Heart right ventricle (tissue), 16 donors: ENCODE measurements at regions of chr5 and their contacts with region 1.

Region 1: DNA sequence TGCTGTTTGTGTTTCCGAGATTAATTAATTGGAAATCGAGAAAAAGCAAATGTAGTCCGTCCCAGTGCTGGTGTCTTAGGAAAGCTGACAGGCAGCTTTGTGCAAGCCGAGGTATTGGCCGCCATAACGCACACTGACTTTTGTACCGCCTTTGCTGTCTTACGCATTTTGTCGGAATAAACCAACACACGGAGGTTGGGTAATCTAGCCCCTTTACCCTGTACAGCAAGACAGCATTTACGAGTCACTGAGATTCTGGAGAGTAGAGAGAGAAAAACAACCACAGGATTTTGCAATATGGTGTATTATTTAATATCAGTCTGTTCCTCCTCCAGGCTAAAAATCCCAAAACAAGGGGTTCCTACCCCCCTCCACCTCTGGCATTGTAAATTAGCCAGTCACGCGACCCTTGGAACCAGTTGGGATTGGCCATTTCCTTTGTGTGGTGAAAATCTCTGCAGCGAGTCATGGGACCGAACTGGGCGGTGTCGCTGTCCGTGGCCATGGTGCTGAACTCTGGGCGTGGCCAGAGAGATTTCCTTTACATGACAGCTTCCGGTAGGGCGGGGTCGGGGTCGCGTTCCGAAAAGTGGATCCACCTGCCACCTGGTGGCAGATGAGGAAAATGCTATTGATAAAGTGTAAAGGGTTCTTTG is 10.3 kb upstream of the PCDHB1 start:
- DNase-seq: peak; percentile 85 to 92
- ATAC-seq: peak; percentile 95 to 98 (median 97)
- H3K4me3 ChIP-seq: peak overlapping the region in 9 of 10 donors; percentile 23 to 56 (median 36)
- H3K27ac ChIP-seq: peak overlapping the region in 2 of 10 donors; percentile 30 to 40
- H3K4me1 ChIP-seq: peaks cover 0 to 13% (median 8%) of the 10 kb centered on the region in 9 donors
- H3K27me3 ChIP-seq: peaks cover 0 to 34% (median 12%) of the 10 kb centered on the region in 7 donors
- CTCF ChIP-seq: peak; percentile 37 to 82 (median 69)

Region 2: GRCh38 chr5:140833997-140834723 is 206.7 kb before region 1 on chr5 and contains the start of gene PCDHA7:
- intact Hi-C with region 1: loop called in 2 of 10 experiments (anchors 5 to 10 kb)
- DNase-seq: no peak
- ATAC-seq: no peak
- H3K4me3 ChIP-seq: peak within 1 kb of the TSS in 2 of 10 donors; percentile 32 to 38
- H3K27ac ChIP-seq: no peak within 1 kb of the TSS
- H3K4me1 ChIP-seq: no peaks in the 10 kb centered on the region
- H3K27me3 ChIP-seq: peaks cover 0 to 93% (median 55%) of the 10 kb centered on the region in 7 donors
- CTCF ChIP-seq: peak in 3 of 9 donors; percentile 18 to 37 (median 24)
- total RNA-seq, gene PCDHA7: 0.07 to 0.15 (median 0.11) TPM in 3 of 10 donors, not detected in the others

Region 3: GRCh38 chr5:140868721-140869554 is 172.0 kb before region 1 on chr5 and contains the start of gene PCDHA11:
- intact Hi-C with region 1: loop called in 2 of 10 experiments (anchors 5 to 10 kb)
- DNase-seq: no peak
- ATAC-seq: no peak
- H3K4me3 ChIP-seq: no peak within 1 kb of the TSS
- H3K27ac ChIP-seq: no peak within 1 kb of the TSS
- H3K4me1 ChIP-seq: no peaks in the 10 kb centered on the region
- H3K27me3 ChIP-seq: peaks cover 0 to 98% (median 42%) of the 10 kb centered on the region in 7 donors
- CTCF ChIP-seq: peak in 5 of 9 donors; percentile 15 to 41 (median 17)
- total RNA-seq, gene PCDHA11: 0.07 TPM in 1 of 10 donors, not detected in the others

Region 4: GRCh38 chr5:140882591-140882899 is 158.4 kb before region 1 on chr5:
- intact Hi-C with region 1: loop called in 3 of 10 experiments (anchors 5 to 10 kb)
- DNase-seq: no peak
- ATAC-seq: no peak
- H3K4me3 ChIP-seq: peak overlapping the region in 1 of 10 donors; percentile 23
- H3K27ac ChIP-seq: no peak overlapping the region
- H3K4me1 ChIP-seq: no peaks in the 10 kb centered on the region
- H3K27me3 ChIP-seq: peaks cover 0 to 88% (median 46%) of the 10 kb centered on the region in 7 donors
- CTCF ChIP-seq: peak in 1 of 9 donors; percentile 3

Region 5: DNA sequence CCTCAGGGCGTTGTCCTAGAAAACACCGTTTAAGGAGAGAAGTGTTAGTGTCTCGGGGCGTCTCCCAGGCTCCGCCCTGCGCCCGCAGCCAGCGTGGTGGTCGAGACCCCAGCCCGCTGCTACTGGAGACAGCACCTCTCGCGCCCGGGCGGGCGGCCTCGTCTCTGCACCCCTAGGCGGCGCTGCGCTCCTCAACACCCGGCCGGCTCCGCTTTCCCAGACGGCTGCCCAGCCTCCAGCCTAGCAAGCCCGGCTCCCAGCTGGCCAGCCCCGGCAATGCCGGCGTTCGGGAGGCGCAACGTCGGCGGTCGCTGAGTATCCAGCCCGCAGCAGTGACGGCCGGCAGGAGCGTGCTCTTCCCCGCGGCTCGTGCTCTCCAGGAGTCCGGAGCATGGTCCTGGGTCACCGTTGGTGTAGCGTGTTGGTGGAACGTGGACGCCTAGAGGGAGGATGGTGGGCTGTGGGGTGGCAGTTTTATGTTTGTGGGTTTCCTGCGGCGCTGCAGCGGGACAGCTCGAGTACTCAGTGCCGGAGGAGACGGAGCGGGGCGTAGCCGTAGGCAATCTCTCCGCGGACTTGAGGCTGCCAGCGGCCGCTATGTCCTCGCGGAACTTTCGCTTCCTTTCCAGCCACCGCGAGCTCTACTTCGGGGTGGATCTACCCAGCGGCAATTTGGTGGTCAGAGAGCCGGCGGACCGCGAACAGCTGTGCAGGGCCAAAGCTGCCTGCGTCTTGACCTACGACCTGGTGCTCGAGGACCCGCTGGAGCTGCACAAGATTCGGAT is 114.3 kb before region 1 on chr5:
- intact Hi-C with region 1: loop called in 1 of 10 experiments (anchors 5 kb)
- DNase-seq: peak; percentile 60 to 73
- ATAC-seq: peak; percentile 73 to 91 (median 84)
- H3K4me3 ChIP-seq: peak overlapping the region; percentile 16 to 57 (median 50)
- H3K27ac ChIP-seq: no peak overlapping the region
- H3K4me1 ChIP-seq: peaks cover 0 to 20% (median 15%) of the 10 kb centered on the region in 9 donors
- H3K27me3 ChIP-seq: peaks cover 0 to 91% (median 70%) of the 10 kb centered on the region in 7 donors
- CTCF ChIP-seq: peak; percentile 23 to 83 (median 66)

Region 6: DNA sequence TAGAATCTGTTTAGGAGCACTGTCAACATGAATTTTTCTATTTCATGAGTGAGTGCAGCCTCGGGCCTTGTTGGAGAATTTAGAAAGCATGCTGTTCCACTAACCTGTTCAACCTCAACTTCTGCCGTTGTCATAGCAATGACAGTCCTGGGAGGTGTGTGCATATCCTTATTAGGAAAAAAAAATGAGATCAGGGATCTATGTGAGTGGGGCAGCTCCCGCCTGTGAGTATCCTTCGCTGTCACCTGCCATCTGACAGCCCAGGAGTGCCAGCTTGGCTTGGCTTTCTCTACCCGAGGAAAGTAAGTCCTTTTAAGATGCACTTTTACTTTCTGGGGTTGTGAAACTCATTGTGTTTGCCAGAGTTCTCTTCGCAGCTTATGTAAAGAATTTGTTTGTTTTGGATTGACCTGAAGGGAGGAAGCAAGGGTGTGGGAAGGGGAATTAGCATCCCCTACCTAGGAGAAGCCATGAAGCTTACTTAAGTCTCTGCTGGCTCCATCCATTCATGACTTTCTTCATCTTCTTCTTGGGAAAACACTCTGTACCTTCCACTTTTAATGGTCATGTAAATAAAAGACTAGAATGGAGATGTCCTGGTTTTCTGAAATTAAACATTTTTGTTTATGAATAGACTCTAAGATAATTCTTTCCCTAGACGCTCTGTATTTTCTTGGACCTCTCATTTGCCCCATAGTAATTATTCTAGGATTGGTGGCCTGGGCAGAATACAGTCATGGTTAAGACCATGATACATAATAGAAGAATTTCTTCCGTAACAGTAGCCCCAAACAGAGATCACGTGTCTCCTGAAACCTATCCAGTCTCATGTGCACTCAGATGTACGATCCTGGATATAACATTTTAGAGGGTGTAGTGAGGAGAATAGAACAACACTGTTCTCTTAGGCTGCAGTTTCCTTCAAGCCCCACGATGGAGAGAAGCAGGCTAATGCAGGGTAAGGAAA is 52.6 kb before region 1 on chr5:
- intact Hi-C with region 1: no loop called
- DNase-seq: no peak
- ATAC-seq: no peak
- H3K4me3 ChIP-seq: no peak overlapping the region
- H3K27ac ChIP-seq: no peak overlapping the region
- H3K4me1 ChIP-seq: no peaks in the 10 kb centered on the region
- H3K27me3 ChIP-seq: peaks cover 0 to 23% (median 3%) of the 10 kb centered on the region in 7 donors
- CTCF ChIP-seq: no peak

Region 7: DNA sequence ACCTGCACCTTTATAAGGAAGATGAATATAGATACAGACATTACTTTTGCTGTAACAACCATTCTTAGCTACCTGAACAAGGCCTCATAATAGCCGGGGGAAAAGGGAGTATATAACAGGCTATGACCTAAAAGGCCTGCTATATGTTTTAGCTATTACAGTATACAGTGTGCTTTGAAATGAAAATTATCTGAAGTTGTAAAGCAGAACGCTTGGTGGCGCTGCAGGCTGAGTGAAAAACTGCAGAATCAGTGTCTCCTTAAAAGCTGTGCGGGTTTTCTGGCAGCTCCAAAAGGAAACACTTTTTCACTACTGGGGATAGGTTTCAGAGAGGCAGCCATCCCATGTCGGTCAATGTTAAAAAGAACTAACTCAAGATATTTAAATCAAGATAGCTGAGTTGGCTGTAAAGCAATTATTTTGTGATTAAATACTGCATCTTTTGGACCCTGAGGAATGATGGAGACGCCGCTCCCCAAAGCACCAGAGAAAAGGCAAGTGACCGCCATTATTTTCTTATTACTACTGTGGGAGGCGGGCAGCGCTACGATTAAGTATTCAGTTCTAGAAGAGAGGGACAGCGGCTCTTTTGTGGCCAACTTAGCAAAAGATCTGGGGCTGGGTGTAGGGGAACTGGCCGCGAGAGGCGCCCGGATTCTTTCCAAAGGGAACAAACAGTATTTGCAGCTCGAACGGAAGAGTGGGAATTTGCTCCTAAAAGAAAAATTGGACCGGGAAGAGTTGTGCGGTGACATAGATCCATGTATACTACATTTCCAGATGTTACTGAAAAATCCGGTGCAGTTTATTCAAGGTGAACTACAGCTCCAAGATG is 114.9 kb after region 1 on chr5:
- intact Hi-C with region 1: no loop called
- DNase-seq: no peak
- ATAC-seq: no peak
- H3K4me3 ChIP-seq: no peak overlapping the region
- H3K27ac ChIP-seq: no peak overlapping the region
- H3K4me1 ChIP-seq: no peaks in the 10 kb centered on the region
- H3K27me3 ChIP-seq: peaks cover 0 to 61% (median 35%) of the 10 kb centered on the region in 7 donors
- CTCF ChIP-seq: peak in 1 of 9 donors; percentile 8

Region 8: DNA sequence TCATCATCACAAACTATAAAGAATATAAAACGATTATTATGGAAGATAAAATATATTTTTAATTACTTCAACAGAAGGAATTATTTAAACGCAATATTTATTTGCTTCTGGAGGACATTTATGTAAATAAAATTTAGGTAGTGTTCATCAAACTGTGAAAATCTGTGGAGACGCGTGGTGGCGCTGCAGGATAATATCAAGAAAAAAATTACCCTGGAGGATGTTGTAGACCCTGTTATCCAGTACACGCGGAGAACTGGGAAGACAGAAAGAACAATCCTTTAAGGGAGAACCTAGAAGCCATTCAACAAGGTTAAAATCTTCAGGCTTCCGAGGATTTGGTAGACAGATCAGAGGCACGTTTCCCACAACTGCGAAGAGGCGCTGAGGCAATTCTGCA is 167.6 kb after region 1 on chr5 and contains the start of gene PCDHB12:
- intact Hi-C with region 1: no loop called
- DNase-seq: no peak
- ATAC-seq: no peak
- H3K4me3 ChIP-seq: peak within 1 kb of the TSS in 6 of 10 donors; percentile 12 to 34 (median 26)
- H3K27ac ChIP-seq: no peak within 1 kb of the TSS
- H3K4me1 ChIP-seq: peaks cover 0 to 1% (median 0%) of the 10 kb centered on the region in 9 donors
- H3K27me3 ChIP-seq: peaks cover 0 to 51% (median 15%) of the 10 kb centered on the region in 7 donors
- CTCF ChIP-seq: peak in 7 of 9 donors; percentile 21 to 50 (median 32)
- total RNA-seq, gene PCDHB12: 0.79 to 1.7 (median 1.1) TPM

Region 9: DNA sequence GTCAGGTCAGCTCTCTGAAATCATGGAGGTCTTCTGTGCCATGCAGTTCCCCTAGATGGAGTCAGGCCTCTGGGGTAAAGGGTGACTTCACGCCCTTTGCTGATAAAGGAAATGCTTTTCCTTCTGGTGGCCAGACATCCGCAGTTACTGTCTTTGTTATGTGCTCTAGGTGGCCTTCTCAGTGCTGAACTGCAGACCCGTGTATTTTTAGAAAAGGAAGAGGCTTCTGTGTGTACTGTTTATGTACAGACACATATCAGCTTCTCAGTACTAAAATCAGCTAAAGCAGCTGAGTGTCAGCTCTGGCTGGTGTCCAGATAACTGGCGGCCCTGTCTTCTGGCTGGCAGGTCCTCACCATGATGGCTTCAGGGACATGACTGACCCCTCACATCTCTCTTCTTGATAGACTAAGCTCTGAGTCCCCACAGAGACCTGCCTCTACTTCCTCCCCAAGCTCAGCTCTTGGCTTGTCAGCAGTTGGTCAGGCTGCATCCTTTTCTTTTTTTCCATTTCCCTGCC is 1804.6 kb after region 1 on chr5:
- intact Hi-C with region 1: no loop called
- DNase-seq: peak in 1 of 2 donors; percentile 40
- ATAC-seq: peak; percentile 19 to 64 (median 49)
- H3K4me3 ChIP-seq: no peak overlapping the region
- H3K27ac ChIP-seq: peak overlapping the region; percentile 48 to 87 (median 71)
- H3K4me1 ChIP-seq: peaks cover 33 to 97% (median 75%) of the 10 kb centered on the region in 9 donors
- H3K27me3 ChIP-seq: no peaks in the 10 kb centered on the region
- CTCF ChIP-seq: no peak